Gastrocnemius medialis (tissue), 4 donors: ENCODE measurements at regions of chr16 and their contacts with region 1.

Region 1: DNA sequence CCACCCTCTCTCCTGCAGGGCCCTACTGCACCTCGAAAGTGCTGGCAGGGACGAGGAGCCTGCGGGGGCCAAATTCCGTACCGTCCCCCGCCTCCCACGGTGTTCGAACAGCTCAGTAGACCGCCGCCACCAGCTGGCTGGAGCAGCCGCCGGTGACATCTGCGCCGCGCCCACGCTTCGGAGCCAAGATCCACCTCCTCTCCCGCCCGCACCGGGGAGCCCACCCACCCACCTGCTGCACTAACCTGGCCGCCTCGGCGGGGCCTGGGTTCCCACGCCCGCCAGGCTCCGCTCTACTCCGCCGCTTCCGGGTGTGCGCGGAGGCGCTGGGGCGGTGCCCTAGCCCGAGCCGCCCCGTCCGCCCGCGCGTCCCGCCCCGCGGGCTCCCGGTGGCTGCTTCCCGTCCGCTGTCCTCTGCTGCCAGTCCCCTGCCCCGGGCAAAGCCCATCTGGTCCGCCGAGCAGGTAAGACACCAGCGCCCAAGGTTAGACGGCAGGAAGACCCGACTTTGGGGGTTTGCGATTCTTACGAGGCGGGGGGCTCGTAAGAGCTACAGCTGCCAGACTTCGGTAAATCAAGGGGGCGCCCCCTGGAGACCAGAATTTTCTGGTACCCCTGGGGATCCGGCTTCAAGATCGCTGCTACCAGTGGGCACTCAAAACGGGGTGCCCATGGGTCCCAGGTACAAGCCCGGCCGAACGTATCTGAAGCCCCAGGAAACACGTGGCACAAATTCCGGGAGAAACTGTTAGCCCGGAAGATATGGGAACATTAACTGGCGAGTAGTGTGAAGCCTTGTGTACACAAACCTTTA is at the starts of genes FBXL8 and TRADD:
- DNase-seq: peak; percentile 63 to 68
- ATAC-seq: peak; percentile 33 to 46
- H3K4me3 ChIP-seq: peak within 1 kb of the TSS; percentile 75 to 87 (median 76)
- H3K27ac ChIP-seq: peak within 1 kb of the TSS; percentile 93 to 100 (median 95)
- H3K4me1 ChIP-seq: peaks cover 41 to 48% of the 10 kb centered on the region in 2 donors
- H3K27me3 ChIP-seq: no peaks in the 10 kb centered on the region
- CTCF ChIP-seq: peak in 4 of 5 experiments; percentile 23 to 51 (median 40)
- POLR2A ChIP-seq: peak; percentile 80 to 91
- total RNA-seq, gene FBXL8: 7.0 to 16.3 (median 14.3) TPM
- total RNA-seq, gene TRADD: 8.8 to 15.3 (median 10.1) TPM

Region 2: DNA sequence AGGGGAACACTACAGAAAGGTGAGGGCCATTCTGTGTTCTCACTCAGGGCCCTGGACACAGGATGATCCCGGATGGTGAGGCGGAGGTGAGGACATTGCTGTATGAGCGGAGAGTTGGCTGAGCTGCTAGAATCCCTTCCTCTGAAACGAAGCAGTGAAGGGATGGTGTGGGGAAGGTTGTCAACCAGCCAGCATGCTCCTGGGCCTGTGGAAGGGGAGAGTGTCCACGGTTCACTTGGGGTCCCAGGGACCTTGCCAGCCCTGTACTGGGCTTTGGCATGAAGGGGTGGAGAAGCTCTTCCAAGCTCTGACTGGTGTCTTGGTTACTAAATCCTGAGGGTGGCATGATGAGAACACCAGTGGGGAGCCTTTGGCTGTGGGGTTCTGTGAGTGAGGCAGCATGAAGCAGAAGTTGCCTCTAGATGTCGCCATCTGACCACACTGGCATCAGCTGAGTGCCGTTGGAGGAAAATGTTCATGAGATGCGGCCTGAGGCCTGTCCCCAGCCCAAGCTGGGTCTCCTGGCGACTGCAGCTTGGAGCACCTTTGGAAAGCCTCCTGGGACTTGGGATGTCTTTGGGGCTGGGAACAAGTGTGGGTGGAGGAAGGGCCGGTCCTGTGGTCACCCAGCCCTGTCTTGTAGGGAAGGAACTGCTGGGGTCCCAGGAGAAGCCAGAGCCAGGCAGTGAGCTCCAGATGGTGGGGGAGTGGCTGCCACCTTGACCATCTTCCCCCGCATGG is 264.7 kb before region 1 on chr16:
- in situ Hi-C with region 1: no loop called
- intact Hi-C with region 1: loop called (anchors 2 kb)
- DNase-seq: peak; percentile 66 to 81
- ATAC-seq: peak; percentile 51 to 53
- H3K4me3 ChIP-seq: no peak overlapping the region
- H3K27ac ChIP-seq: peak overlapping the region; percentile 71 to 98 (median 96)
- H3K4me1 ChIP-seq: peaks cover 21 to 25% of the 10 kb centered on the region in 2 donors
- H3K27me3 ChIP-seq: no peaks in the 10 kb centered on the region
- CTCF ChIP-seq: peak; percentile 80 to 94 (median 88)
- POLR2A ChIP-seq: no peak

Region 3: DNA sequence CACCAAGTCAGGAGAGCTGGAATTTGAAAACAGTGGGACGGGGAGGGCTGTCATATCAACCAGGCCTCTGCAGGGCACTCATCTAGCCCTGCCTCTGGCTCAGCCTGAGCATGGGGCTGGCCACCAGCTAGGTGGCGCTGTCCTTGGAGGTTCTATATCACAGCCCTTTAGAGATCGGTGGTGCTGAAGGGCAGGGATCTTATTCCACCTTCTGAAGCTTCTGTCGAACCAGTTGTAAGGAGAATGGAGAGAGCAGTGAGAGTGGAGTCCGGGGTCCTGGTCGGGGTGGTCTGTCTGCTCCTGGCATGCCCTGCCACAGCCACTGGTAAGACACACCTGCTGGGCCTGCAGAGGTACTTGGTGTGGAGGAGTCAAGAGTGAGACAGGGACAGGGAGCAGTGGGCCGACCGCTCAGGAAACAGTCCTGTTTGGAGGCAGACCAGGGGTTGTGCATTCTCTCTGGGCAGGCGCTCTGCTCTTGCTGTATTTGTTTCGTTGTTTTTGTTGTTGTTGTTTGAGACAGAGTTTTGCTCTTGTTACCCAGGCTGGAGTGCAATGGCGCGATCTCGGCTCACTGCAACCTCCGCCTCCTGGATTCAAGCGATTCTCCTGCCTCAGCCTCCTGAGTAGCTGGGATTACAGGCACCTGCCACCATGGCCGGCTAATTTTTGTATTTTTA is 198.6 kb before region 1 on chr16 and contains the start of gene CES3:
- in situ Hi-C with region 1: loop called in 1 of 4 experiments (anchors 10 kb)
- intact Hi-C with region 1: no loop called
- DNase-seq: peak in 1 of 2 donors; percentile 57
- ATAC-seq: peak; percentile 35 to 67
- H3K4me3 ChIP-seq: no peak within 1 kb of the TSS
- H3K27ac ChIP-seq: peak within 1 kb of the TSS; percentile 43 to 71 (median 54)
- H3K4me1 ChIP-seq: peaks cover 19 to 21% of the 10 kb centered on the region in 2 donors
- H3K27me3 ChIP-seq: no peaks in the 10 kb centered on the region
- CTCF ChIP-seq: peak; percentile 19 to 68 (median 50)
- POLR2A ChIP-seq: no peak
- total RNA-seq, gene CES3: 10.3 to 30.3 (median 12.9) TPM

Region 4: DNA sequence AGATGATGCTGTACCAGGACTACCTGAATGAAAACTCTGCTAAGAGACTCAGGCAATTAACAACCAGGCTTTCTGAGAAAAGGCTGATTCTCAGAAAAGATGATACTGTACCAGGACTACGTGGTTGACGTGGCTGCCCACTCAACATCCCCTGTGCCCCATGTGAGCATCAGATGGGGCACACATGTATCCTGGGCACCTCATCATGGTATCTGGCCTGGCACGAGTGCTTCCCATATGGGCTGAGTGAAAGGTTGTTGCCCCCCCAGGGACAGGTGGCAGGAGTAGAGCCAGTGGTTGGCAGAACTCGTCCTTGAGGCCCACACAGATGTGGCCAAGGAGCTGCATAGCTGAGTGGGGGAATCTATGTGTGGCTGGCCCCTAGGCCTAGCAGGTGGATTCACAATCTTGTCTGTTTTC is 174.9 kb before region 1 on chr16:
- in situ Hi-C with region 1: no loop called
- intact Hi-C with region 1: loop called (anchors 2 kb)
- DNase-seq: no peak
- ATAC-seq: no peak
- H3K4me3 ChIP-seq: no peak overlapping the region
- H3K27ac ChIP-seq: no peak overlapping the region
- H3K4me1 ChIP-seq: no peaks in the 10 kb centered on the region
- H3K27me3 ChIP-seq: no peaks in the 10 kb centered on the region
- CTCF ChIP-seq: no peak
- POLR2A ChIP-seq: no peak

Region 5: DNA sequence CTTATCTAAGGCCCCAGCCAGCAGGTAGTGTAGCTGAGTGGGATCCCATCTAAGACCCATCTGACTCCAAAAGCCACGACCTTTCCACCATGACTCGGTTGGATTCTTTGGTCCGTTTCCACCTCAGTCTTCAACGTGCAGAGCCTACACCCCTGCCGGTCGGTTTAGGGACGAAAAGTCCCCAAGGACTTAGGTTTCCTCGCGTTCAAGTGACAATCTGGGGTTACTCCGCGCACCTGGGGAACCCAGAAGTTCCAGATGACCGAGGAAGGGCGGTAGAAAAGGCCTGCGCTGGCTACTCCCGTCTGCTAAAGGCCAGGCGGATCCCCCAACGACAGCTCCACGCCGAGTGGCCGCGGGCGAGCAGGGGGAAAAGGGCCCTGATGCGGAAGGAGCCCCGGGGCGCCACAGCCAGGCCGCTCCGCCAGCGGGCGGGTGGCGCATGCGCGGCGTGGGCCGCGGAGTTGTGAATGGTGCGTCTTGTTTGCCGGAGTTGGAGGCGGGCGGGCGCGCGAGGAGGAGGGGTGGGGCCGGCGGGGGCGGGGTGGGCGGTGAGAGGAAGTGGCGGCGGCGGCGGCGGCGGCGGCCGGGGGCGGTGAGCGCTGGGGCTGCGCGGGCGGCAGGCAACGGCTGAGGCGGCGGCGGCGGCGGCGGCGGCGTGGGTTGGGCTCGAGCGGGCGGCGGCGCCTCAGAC is 131.1 kb before region 1 on chr16 and contains the start of gene CBFB:
- in situ Hi-C with region 1: no loop called
- intact Hi-C with region 1: loop called (anchors 2 kb)
- DNase-seq: peak; percentile 86 to 90
- ATAC-seq: peak; percentile 87 to 88
- H3K4me3 ChIP-seq: peak within 1 kb of the TSS; percentile 70 to 92 (median 80)
- H3K27ac ChIP-seq: peak within 1 kb of the TSS; percentile 97 to 98 (median 98)
- H3K4me1 ChIP-seq: peaks cover 26 to 31% of the 10 kb centered on the region in 2 donors
- H3K27me3 ChIP-seq: no peaks in the 10 kb centered on the region
- CTCF ChIP-seq: peak in 1 of 5 experiments; percentile 4
- POLR2A ChIP-seq: peak; percentile 79 to 80
- total RNA-seq, gene CBFB: 38.9 to 105 (median 96.5) TPM

Region 6: DNA sequence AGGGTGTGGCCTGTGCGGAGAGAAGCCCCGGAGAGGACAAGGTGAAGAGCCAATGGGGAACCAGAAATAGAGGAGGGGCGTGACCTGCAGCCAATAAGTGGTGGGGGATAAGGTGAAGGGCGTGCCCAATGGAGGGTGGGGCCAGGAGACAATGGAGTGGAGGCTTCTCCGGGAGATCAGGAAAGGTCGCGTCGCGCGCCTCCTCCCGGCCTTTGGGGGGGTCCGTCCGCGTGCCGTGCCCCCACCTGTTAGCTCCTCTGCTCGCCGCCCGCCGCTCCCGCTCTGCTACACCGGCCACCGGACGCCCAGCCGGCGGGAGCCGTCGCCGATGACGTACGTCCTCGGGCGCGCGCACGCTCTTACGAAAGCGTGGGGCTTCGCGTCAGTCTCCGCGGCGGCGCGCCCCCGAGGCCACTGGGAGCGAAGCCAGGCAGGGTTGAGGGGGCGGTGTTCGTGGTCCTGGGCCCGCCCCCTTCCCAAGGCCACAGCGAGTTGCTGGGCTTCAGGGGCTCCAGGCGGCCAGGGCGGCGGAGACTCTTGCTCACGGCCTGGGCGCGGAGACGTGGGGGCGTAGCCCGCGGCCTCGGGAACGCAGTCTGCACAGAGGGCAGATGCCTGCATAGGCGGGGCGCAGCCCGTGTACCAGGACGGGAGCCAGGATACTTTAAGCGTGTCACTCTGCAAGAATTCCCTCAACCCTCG is 24.0 kb after region 1 on chr16 and contains the start of gene MATCAP1:
- in situ Hi-C with region 1: no loop called
- intact Hi-C with region 1: loop called (anchors 1 kb)
- DNase-seq: peak; percentile 95 to 97
- ATAC-seq: peak; percentile 93 to 96
- H3K4me3 ChIP-seq: peak within 1 kb of the TSS; percentile 65 to 88 (median 70)
- H3K27ac ChIP-seq: peak within 1 kb of the TSS; percentile 85 to 97 (median 95)
- H3K4me1 ChIP-seq: peaks cover 16 to 31% of the 10 kb centered on the region in 2 donors
- H3K27me3 ChIP-seq: no peaks in the 10 kb centered on the region
- CTCF ChIP-seq: no peak
- POLR2A ChIP-seq: peak; percentile 61 to 63
- total RNA-seq, gene MATCAP1: 2.5 to 7.7 (median 4.5) TPM